PC-3 (cell line): ENCODE measurements at regions of chr11 and their contacts with region 1.

Region 1: GRCh38 chr11:45045683-45046471 is 95.2 kb upstream of the TP53I11 start:
- DNase-seq: peak; percentile 83
- ATAC-seq: peak; percentile 79
- H3K4me3 ChIP-seq: peak overlapping the region; percentile 54
- H3K27ac ChIP-seq: peak overlapping the region; percentile 83
- H3K4me1 ChIP-seq: peaks cover 41% of the 10 kb centered on the region
- H3K27me3 ChIP-seq: no peaks in the 10 kb centered on the region
- CTCF ChIP-seq: no peak

Region 2: GRCh38 chr11:44911029-44911814 is 134.7 kb before region 1 on chr11:
- CTCF ChIA-PET with region 1: no interaction called
- POLR2A ChIA-PET with region 1: no interaction called
- intact Hi-C with region 1: no loop called
- DNase-seq: peak; percentile 91
- ATAC-seq: peak; percentile 96
- H3K4me3 ChIP-seq: peak overlapping the region; percentile 34; the same call in 1 of the 2 replicates
- H3K27ac ChIP-seq: no peak overlapping the region
- H3K4me1 ChIP-seq: no peaks in the 10 kb centered on the region
- H3K27me3 ChIP-seq: peaks cover 14% of the 10 kb centered on the region
- CTCF ChIP-seq: peak; percentile 82

Region 3: GRCh38 chr11:44936525-44936924 is 109.4 kb before region 1 on chr11:
- CTCF ChIA-PET with region 1: interaction called, 7 read pairs
- POLR2A ChIA-PET with region 1: no interaction called
- intact Hi-C with region 1: loop called (anchors 1 kb)
- DNase-seq: peak; percentile 84
- ATAC-seq: peak; percentile 89
- H3K4me3 ChIP-seq: no peak overlapping the region
- H3K27ac ChIP-seq: no peak overlapping the region
- H3K4me1 ChIP-seq: no peaks in the 10 kb centered on the region
- H3K27me3 ChIP-seq: no peaks in the 10 kb centered on the region
- CTCF ChIP-seq: peak; percentile 88

Region 4: DNA sequence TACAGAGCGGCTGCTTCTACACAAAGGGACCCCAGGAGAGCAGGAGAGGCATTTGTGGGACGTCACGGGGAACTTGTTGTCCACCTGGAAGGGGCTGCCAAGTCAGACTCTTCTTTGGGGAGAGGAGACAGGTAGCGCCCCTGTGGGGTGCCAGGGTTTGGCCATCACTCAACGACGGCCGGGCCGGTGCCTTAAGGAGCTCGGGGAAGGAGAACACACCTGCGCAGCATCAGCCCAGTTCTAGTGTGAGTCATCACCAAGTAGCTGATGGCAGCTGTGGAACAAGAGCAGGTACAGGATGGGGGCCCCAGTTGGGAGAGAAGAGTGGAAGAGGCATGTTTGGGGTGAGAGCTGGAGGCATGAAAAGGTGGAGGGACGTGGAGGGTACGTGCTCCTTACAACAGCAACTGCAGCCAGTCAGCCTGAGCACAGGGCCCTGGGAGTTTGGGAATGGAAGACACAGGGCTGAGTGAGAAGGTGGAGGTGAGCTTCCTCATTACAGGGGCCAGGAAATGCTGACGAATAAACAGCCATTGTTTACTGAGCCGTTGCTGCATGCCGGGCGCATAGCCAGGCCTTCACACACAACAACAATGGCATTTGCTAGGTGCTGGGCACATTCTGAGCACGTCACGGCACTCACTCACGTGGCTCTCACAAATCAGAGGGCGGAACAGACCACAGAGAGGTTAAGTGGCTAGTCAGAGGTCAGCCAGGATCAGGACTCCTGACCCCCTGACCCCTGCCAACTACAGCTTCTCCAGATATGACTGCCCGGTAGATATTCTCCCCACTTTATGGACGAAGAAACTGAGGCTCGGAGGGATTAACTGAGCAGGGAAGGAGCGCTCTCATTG is 66.1 kb before region 1 on chr11:
- CTCF ChIA-PET with region 1: interaction called, 4 read pairs
- POLR2A ChIA-PET with region 1: no interaction called
- intact Hi-C with region 1: loop called (anchors 5 kb)
- DNase-seq: peak; percentile 92
- ATAC-seq: peak; percentile 63
- H3K4me3 ChIP-seq: peak overlapping the region; percentile 54
- H3K27ac ChIP-seq: peak overlapping the region; percentile 99
- H3K4me1 ChIP-seq: peaks cover 37% of the 10 kb centered on the region
- H3K27me3 ChIP-seq: no peaks in the 10 kb centered on the region
- CTCF ChIP-seq: no peak